ENCODE measurements at regions of chr2 and their contacts with region 1.

Region 1: GRCh38 chr2:224778474-224778877 is 62.3 kb upstream of the CCDC195 start:
- DNase-seq: peak; percentile 32 to 36
- H3K4me3 ChIP-seq: no peak overlapping the region
- H3K4me3 Mint-ChIP-seq: no peak overlapping the region
- H3K27ac Mint-ChIP-seq: no peak overlapping the region
- H3K4me1 ChIP-seq: no peaks in the 10 kb centered on the region
- H3K4me1 Mint-ChIP-seq: peaks cover 7% of the 10 kb centered on the region
- H3K27me3 ChIP-seq: no peaks in the 10 kb centered on the region
- H3K27me3 Mint-ChIP-seq: no peaks in the 10 kb centered on the region
- CTCF ChIP-seq: peak; percentile 53 to 74

Region 2: GRCh38 chr2:224449212-224450147 is 329.0 kb before region 1 on chr2:
- CTCF ChIA-PET with region 1: no interaction called
- POLR2A ChIA-PET with region 1: no interaction called
- intact Hi-C with region 1: loop called (anchors 5 kb)
- DNase-seq: peak in 1 of 2 experiments; percentile 35
- H3K4me3 ChIP-seq: no peak overlapping the region
- H3K4me3 Mint-ChIP-seq: no peak overlapping the region
- H3K27ac Mint-ChIP-seq: no peak overlapping the region
- H3K4me1 ChIP-seq: no peaks in the 10 kb centered on the region
- H3K4me1 Mint-ChIP-seq: no peaks in the 10 kb centered on the region
- H3K27me3 ChIP-seq: no peaks in the 10 kb centered on the region
- H3K27me3 Mint-ChIP-seq: no peaks in the 10 kb centered on the region
- CTCF ChIP-seq: peak; percentile 82 to 85

Region 3: GRCh38 chr2:224749136-224749535 is 29.3 kb before region 1 on chr2:
- CTCF ChIA-PET with region 1: no interaction called
- POLR2A ChIA-PET with region 1: no interaction called
- intact Hi-C with region 1: loop called (anchors 1 kb)
- DNase-seq: no peak
- H3K4me3 ChIP-seq: no peak overlapping the region
- H3K4me3 Mint-ChIP-seq: no peak overlapping the region
- H3K27ac Mint-ChIP-seq: no peak overlapping the region
- H3K4me1 ChIP-seq: no peaks in the 10 kb centered on the region
- H3K4me1 Mint-ChIP-seq: no peaks in the 10 kb centered on the region
- H3K27me3 ChIP-seq: no peaks in the 10 kb centered on the region
- H3K27me3 Mint-ChIP-seq: no peaks in the 10 kb centered on the region
- CTCF ChIP-seq: no peak

Region 4: DNA sequence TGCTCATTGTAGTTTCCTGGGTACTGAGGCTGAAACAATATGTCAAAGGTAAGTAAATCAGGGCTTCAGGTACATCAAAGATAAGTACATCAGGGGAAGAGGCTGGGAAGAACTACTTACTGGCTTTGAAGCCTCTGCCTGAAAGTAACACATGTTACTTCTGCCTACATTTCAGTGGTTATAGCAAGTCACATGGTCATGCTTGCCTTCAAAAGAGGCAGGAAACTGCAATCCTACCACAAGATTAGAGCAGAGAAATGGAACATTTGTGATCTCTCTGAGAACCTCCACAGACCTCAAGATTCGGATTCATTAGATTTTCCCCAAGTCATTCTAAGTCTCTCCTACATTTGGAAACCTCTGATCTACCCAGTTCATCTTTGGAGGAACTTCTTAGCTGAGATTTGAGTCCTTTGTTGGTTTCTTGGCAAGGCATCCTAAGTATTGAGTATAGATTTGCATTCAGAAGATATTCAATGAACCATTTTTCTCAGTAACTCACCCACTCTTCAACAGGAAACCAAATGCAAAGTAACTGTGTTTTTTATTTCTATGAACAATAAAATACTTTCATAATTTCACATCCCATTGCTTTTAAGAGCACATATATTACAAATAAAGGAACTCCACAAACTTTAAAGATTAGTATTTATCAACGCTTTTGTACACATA is 13.8 kb before region 1 on chr2:
- CTCF ChIA-PET with region 1: no interaction called
- POLR2A ChIA-PET with region 1: no interaction called
- intact Hi-C with region 1: no loop called
- DNase-seq: no peak
- H3K4me3 ChIP-seq: no peak overlapping the region
- H3K4me3 Mint-ChIP-seq: no peak overlapping the region
- H3K27ac Mint-ChIP-seq: no peak overlapping the region
- H3K4me1 ChIP-seq: no peaks in the 10 kb centered on the region
- H3K4me1 Mint-ChIP-seq: no peaks in the 10 kb centered on the region
- H3K27me3 ChIP-seq: no peaks in the 10 kb centered on the region
- H3K27me3 Mint-ChIP-seq: no peaks in the 10 kb centered on the region
- CTCF ChIP-seq: no peak

Region 5: GRCh38 chr2:224909885-224910573 is 131.6 kb after region 1 on chr2:
- CTCF ChIA-PET with region 1: no interaction called
- POLR2A ChIA-PET with region 1: no interaction called
- intact Hi-C with region 1: no loop called
- DNase-seq: no peak
- H3K4me3 ChIP-seq: no peak overlapping the region
- H3K4me3 Mint-ChIP-seq: no peak overlapping the region
- H3K27ac Mint-ChIP-seq: no peak overlapping the region
- H3K4me1 ChIP-seq: no peaks in the 10 kb centered on the region
- H3K4me1 Mint-ChIP-seq: no peaks in the 10 kb centered on the region
- H3K27me3 ChIP-seq: no peaks in the 10 kb centered on the region
- H3K27me3 Mint-ChIP-seq: peaks cover 3% of the 10 kb centered on the region
- CTCF ChIP-seq: no peak